Activated CD8-positive, alpha-beta memory T cell treated with anti-CD3 and anti-CD28 coated beads, Interleukin-2, amount 10 ng/mL, durations not matched to agents 7 days and 5 days (primary cell): ENCODE measurements at regions of chr12 and their contacts with region 1.

Region 1: GRCh38 chr12:8949342-8950220 is at the start of gene M6PR:
- DNase-seq: peak; percentile 97
- ATAC-seq: peak; percentile 87
- H3K4me3 Mint-ChIP-seq: peak within 1 kb of the TSS; percentile 98
- H3K27ac Mint-ChIP-seq: peak within 1 kb of the TSS; percentile 92
- H3K4me1 Mint-ChIP-seq: peaks cover 55% of the 10 kb centered on the region
- H3K27me3 Mint-ChIP-seq: no peaks in the 10 kb centered on the region
- total RNA-seq, gene M6PR: 182 to 206 TPM

Region 2: DNA sequence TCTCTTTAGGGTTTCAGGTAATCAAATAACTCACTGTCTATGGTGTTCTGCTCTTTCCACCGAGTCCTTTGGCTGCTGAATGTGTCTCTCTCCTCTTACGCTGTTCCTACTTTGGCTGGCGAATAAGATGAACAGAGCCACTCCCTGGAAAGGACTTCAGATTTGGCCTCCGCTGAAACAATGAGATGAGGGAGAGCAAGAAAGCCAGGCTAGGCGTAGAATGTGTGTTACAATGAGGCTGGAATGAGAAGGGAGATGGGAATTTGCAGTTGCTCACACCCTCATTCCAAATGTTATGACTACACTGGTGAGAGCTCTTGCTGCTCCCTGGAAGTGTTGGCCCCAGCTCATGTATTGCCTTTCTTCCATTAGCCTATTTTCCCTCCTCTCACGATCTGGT is 287.0 kb before region 1 on chr12 and contains the start of gene MFAP5:
- CTCF ChIA-PET with region 1: interaction called, 10 read pairs
- DNase-seq: no peak
- ATAC-seq: no peak
- H3K4me3 Mint-ChIP-seq: no peak within 1 kb of the TSS
- H3K27ac Mint-ChIP-seq: no peak within 1 kb of the TSS
- H3K4me1 Mint-ChIP-seq: no peaks in the 10 kb centered on the region
- H3K27me3 Mint-ChIP-seq: peaks cover 12% of the 10 kb centered on the region
- total RNA-seq, gene MFAP5: not detected

Region 3: GRCh38 chr12:8914716-8915526 is 34.7 kb before region 1 on chr12:
- CTCF ChIA-PET with region 1: interaction called, 11 read pairs
- DNase-seq: peak; percentile 72
- ATAC-seq: peak; percentile 92
- H3K4me3 Mint-ChIP-seq: no peak overlapping the region
- H3K27ac Mint-ChIP-seq: no peak overlapping the region
- H3K4me1 Mint-ChIP-seq: peaks cover 8% of the 10 kb centered on the region
- H3K27me3 Mint-ChIP-seq: peaks cover 18% of the 10 kb centered on the region

Region 4: GRCh38 chr12:9032202-9033178 is 82.9 kb after region 1 on chr12:
- CTCF ChIA-PET with region 1: interaction called, 71 read pairs
- DNase-seq: no peak
- ATAC-seq: no peak
- H3K4me3 Mint-ChIP-seq: no peak overlapping the region
- H3K27ac Mint-ChIP-seq: no peak overlapping the region
- H3K4me1 Mint-ChIP-seq: peaks cover 15% of the 10 kb centered on the region
- H3K27me3 Mint-ChIP-seq: peaks cover 4% of the 10 kb centered on the region

Region 5: DNA sequence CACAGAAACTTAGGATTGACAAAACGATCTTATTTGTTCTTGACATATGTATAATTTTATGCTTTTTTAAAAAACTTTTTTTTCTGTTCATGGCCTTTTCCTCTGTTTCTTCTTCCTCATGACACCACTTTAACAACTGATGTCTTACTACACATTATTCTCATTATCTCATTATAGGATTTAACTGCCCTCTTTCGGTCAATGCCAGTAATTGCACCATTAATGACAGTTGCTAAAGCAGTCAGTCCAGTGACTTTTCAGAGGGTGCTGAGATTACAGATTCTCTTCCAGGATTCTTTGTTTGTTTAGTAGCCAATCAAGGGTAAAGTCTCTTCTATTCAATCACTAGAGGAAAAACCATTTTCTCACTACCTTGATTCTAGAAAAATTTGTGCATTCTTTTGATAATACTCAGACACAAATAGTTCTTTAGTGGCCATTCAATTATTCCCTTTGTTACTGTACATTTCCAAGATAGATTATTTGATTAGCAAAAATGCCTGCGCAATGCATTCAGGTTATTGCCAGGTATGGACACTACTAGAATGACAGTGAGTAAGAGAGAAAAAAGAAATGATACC is 89.9 kb after region 1 on chr12:
- CTCF ChIA-PET with region 1: interaction called, 71 read pairs
- DNase-seq: no peak
- ATAC-seq: peak; percentile 61
- H3K4me3 Mint-ChIP-seq: no peak overlapping the region
- H3K27ac Mint-ChIP-seq: no peak overlapping the region
- H3K4me1 Mint-ChIP-seq: peaks cover 8% of the 10 kb centered on the region
- H3K27me3 Mint-ChIP-seq: peaks cover 11% of the 10 kb centered on the region

Region 6: GRCh38 chr12:9049520-9050133 is 100.0 kb after region 1 on chr12:
- CTCF ChIA-PET with region 1: interaction called, 101 read pairs
- DNase-seq: no peak
- ATAC-seq: peak; percentile 76
- H3K4me3 Mint-ChIP-seq: no peak overlapping the region
- H3K27ac Mint-ChIP-seq: no peak overlapping the region
- H3K4me1 Mint-ChIP-seq: peaks cover 7% of the 10 kb centered on the region
- H3K27me3 Mint-ChIP-seq: peaks cover 4% of the 10 kb centered on the region